BJ (cell line): ENCODE measurements at regions of chr11 and their contacts with region 1.

Region 1: GRCh38 chr11:102341844-102342318 is 5.1 kb upstream of the BIRC2 start:
- DNase-seq: no peak
- H3K4me3 ChIP-seq: no peak overlapping the region
- H3K27me3 ChIP-seq: no peaks in the 10 kb centered on the region
- CTCF ChIP-seq: peak; percentile 81

Region 2: DNA sequence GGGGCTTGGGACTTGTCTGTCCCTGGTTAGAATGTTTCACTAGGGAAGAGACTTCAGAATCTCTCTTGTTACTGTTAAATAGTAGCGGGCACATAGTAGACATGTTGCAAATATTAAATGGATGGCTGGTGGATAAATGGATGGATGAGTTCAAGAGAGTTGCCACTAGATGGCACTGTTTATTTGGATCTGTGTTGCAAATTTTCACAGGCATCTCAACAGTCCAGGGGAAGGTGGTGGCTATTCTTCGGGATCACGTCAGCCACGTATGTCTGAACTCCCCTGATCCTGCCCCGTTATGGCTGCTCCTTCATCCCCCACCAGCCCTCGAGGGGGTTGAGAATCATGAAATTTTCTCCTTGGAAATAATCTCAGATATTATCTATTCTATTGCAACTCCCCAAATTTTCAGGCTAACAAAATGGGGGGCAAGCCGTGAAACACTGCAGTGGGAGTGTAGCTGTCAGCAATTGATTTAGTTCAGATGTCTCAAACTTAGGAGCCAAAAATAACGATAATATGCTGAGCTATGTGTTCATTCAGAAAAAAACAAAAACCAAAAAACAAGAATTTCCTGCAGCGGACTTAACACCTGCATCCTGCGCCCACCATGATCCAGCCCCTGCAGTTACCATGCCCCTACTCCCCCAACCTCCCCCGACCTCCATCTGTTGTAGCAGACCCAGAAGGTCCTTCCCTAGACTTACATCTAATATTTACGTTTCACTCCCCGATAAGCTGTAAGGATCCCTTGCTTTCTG is 53.7 kb before region 1 on chr11:
- CTCF ChIA-PET with region 1: interaction called, 38 read pairs
- POLR2A ChIA-PET with region 1: no interaction called
- DNase-seq: no peak
- H3K4me3 ChIP-seq: no peak overlapping the region
- H3K27me3 ChIP-seq: no peaks in the 10 kb centered on the region
- CTCF ChIP-seq: peak; percentile 68

Region 3: DNA sequence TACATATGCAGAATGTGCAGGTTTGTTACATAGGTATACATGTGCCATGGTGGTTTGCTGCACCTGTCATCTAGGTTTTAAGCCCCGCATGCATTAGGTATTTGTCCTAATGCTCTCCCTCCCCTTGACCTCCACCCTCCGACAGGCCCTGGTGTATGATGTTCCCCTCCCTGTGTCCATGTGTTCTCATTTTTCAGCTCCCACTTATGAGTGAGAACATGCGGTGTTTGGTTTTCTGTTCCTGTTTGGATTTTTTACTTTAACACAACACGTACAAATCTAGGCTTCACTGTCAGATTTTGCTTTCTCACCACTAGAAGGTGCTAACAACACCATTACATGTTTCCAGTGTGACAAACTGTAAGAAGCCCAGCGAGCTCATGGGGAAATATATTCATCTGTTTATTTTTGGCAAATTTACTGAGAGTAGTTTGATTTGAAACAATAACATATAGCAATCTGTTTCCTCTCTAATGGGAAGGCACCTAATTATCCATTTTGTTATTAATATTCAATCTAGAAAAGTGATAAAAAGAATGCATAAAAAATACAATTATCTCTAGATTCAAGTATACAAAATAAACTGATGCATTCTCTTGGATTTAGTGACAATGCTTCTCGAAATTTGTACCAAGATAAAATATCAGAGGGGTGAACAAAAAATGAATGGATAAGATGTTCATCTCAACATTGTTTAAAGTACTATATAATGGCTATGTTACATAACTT is 47.8 kb before region 1 on chr11:
- CTCF ChIA-PET with region 1: interaction called, 38 read pairs
- POLR2A ChIA-PET with region 1: no interaction called
- DNase-seq: no peak
- H3K4me3 ChIP-seq: no peak overlapping the region
- H3K27me3 ChIP-seq: no peaks in the 10 kb centered on the region
- CTCF ChIP-seq: peak; percentile 72

Region 4: GRCh38 chr11:102383839-102384238 is 42.0 kb after region 1 on chr11:
- CTCF ChIA-PET with region 1: no interaction called
- POLR2A ChIA-PET with region 1: no interaction called
- DNase-seq: no peak
- H3K4me3 ChIP-seq: no peak overlapping the region
- H3K27me3 ChIP-seq: no peaks in the 10 kb centered on the region
- CTCF ChIP-seq: no peak

Region 5: DNA sequence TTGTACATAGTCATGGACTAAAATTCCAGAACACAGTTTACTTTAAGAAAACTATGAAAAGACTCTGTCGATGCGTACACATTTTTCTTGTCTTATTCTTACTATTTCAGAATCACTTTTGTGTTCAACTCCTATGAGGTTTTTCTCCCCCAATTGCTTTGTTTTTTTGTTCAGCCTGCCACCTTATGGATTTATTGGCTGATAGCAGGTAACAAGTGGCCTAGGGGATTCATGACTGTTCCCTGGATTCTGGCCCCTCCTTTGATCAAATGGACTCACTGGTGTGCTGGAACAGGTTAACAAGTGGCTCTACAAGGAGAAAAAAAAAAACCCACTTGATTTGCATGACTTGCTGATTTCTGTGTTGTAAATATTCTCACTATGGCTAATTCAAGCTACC is 272.6 kb after region 1 on chr11:
- CTCF ChIA-PET with region 1: interaction called, 19 read pairs
- POLR2A ChIA-PET with region 1: no interaction called
- DNase-seq: no peak
- H3K4me3 ChIP-seq: no peak overlapping the region
- H3K27me3 ChIP-seq: peaks cover 1% of the 10 kb centered on the region; the same call in 1 of the 2 replicates
- CTCF ChIP-seq: no peak